Activated CD8-positive, alpha-beta T cell treated with anti-CD3 and anti-CD28 coated beads for 36 hours (primary cell): ENCODE measurements at regions of chr17 and their contacts with region 1.

Region 1: DNA sequence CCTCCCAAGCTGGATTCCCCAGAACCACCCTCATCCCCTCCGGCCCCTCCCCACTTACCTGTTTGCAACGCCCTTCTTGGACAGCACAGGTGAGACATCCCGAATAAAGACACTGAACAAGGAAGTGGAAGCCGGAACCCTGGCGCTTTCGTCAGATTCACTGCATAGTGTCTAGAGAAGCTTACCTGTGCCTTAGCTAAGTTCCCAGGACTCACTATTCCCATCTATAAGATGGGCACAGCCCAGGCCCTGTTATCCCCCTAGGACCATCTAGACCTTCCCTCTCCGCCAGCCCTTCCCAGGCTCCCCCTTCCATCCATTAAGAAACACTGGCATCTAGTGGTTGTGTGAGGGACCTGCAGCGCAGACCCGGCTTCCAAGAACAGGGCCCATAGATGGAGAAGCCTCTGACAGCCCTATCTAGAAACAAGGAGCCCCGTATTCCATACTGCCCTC is 26.9 kb upstream of the RPL38 start:
- DNase-seq: peak; percentile 64
- ATAC-seq: peak; percentile 79
- H3K4me3 Mint-ChIP-seq: no peak overlapping the region
- H3K27ac Mint-ChIP-seq: no peak overlapping the region
- H3K4me1 Mint-ChIP-seq: no peaks in the 10 kb centered on the region
- H3K27me3 Mint-ChIP-seq: peaks cover 16% of the 10 kb centered on the region
- CTCF ChIP-seq: peak; percentile 73

Region 2: GRCh38 chr17:74089869-74090464 is 86.6 kb before region 1 on chr17:
- CTCF ChIA-PET with region 1: interaction called, 9 read pairs
- POLR2A ChIA-PET with region 1: no interaction called
- intact Hi-C with region 1: loop called (anchors 10 kb)
- DNase-seq: peak; percentile 83
- ATAC-seq: peak; percentile 71
- H3K4me3 Mint-ChIP-seq: no peak overlapping the region
- H3K27ac Mint-ChIP-seq: no peak overlapping the region
- H3K4me1 Mint-ChIP-seq: no peaks in the 10 kb centered on the region
- H3K27me3 Mint-ChIP-seq: peaks cover 7% of the 10 kb centered on the region
- CTCF ChIP-seq: peak; percentile 71

Region 3: GRCh38 chr17:74163271-74163821 is 13.2 kb before region 1 on chr17:
- CTCF ChIA-PET with region 1: no interaction called
- POLR2A ChIA-PET with region 1: no interaction called
- intact Hi-C with region 1: no loop called
- DNase-seq: no peak
- ATAC-seq: no peak
- H3K4me3 Mint-ChIP-seq: no peak overlapping the region
- H3K27ac Mint-ChIP-seq: no peak overlapping the region
- H3K4me1 Mint-ChIP-seq: peaks cover 4% of the 10 kb centered on the region
- H3K27me3 Mint-ChIP-seq: peaks cover 4% of the 10 kb centered on the region
- CTCF ChIP-seq: no peak